WTC11 (cell line): ENCODE measurements at regions of chr12 and their contacts with region 1.

Region 1: GRCh38 chr12:72271451-72272090 is 599 bp upstream of the TRHDE start:
- DNase-seq: peak; percentile 63
- ATAC-seq: peak; percentile 69
- H3K4me3 Mint-ChIP-seq: peak overlapping the region; percentile 92
- H3K27ac Mint-ChIP-seq: peak overlapping the region; percentile 82; the same call in 1 of the 2 replicates
- H3K4me1 Mint-ChIP-seq: peaks cover 44% of the 10 kb centered on the region
- H3K27me3 Mint-ChIP-seq: peaks cover 57% of the 10 kb centered on the region
- CTCF ChIP-seq: no peak

Region 2: GRCh38 chr12:72017054-72017651 is 254.4 kb before region 1 on chr12:
- CTCF ChIA-PET with region 1: interaction called, 10 read pairs
- POLR2A ChIA-PET with region 1: no interaction called
- DNase-seq: peak; percentile 75
- ATAC-seq: peak; percentile 97
- H3K4me3 Mint-ChIP-seq: no peak overlapping the region
- H3K27ac Mint-ChIP-seq: no peak overlapping the region
- H3K4me1 Mint-ChIP-seq: peaks cover 6% of the 10 kb centered on the region
- H3K27me3 Mint-ChIP-seq: no peaks in the 10 kb centered on the region
- CTCF ChIP-seq: peak; percentile 68

Region 3: DNA sequence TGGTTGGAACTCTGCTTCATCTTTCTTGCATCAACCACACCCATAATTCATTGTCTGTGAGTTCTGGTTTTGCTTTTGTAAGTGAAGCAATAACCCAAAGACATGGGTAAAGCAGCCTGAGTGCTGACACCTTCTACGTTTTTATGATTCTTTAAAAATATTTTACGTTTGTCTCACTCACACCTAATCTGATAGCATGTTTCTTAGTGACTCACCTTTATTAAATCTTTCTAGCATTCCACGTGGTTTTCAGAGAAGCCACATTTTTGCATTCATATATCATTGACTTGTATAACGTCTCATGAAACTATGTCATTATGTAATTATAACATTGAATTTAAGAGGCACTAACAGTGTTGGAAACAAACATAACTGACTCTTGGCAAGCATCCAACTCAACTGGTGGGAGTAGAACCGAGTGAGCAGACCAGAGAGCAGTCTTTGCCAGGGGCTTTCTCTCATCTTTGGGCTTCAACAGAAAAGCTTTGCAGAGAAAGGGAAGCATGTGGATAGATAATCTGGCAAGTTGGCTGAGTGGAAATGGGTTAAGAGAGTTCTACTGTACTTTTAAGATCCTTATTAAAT is 214.1 kb before region 1 on chr12:
- CTCF ChIA-PET with region 1: no interaction called
- POLR2A ChIA-PET with region 1: no interaction called
- DNase-seq: no peak
- ATAC-seq: no peak
- H3K4me3 Mint-ChIP-seq: no peak overlapping the region
- H3K27ac Mint-ChIP-seq: no peak overlapping the region
- H3K4me1 Mint-ChIP-seq: no peaks in the 10 kb centered on the region
- H3K27me3 Mint-ChIP-seq: no peaks in the 10 kb centered on the region
- CTCF ChIP-seq: no peak

Region 4: GRCh38 chr12:72285861-72286260 is 14.3 kb after region 1 on chr12:
- CTCF ChIA-PET with region 1: interaction called, 10 read pairs
- POLR2A ChIA-PET with region 1: no interaction called
- DNase-seq: no peak
- ATAC-seq: no peak
- H3K4me3 Mint-ChIP-seq: no peak overlapping the region
- H3K27ac Mint-ChIP-seq: no peak overlapping the region
- H3K4me1 Mint-ChIP-seq: peaks cover 18% of the 10 kb centered on the region
- H3K27me3 Mint-ChIP-seq: no peaks in the 10 kb centered on the region
- CTCF ChIP-seq: no peak

Region 5: DNA sequence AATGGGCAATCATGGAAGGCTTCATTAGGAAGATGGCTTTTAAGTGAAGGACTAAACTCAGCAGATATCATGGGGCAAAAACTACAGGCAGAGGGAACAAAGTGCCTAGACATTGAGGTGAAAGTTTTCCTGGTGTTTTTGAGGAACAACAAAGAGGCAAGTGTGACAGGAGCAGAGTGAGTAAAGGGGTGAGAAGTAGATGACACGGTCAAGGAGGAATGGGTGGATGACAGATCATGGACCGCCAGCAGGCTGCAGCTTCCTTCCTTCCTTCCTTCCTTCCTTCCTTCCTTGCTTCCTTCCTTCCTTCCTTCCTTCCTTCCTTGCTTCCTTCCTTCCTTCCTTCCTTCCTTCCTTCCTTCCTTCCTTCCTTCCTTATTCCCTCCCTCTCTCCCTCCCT is 108.9 kb after region 1 on chr12:
- CTCF ChIA-PET with region 1: no interaction called
- POLR2A ChIA-PET with region 1: no interaction called
- DNase-seq: no peak
- ATAC-seq: no peak
- H3K4me3 Mint-ChIP-seq: no peak overlapping the region
- H3K27ac Mint-ChIP-seq: no peak overlapping the region
- H3K4me1 Mint-ChIP-seq: peaks cover 12% of the 10 kb centered on the region
- H3K27me3 Mint-ChIP-seq: no peaks in the 10 kb centered on the region
- CTCF ChIP-seq: no peak